Left lung (tissue), 14 donors: ENCODE measurements at regions of chr17 and their contacts with region 1.

Region 1: DNA sequence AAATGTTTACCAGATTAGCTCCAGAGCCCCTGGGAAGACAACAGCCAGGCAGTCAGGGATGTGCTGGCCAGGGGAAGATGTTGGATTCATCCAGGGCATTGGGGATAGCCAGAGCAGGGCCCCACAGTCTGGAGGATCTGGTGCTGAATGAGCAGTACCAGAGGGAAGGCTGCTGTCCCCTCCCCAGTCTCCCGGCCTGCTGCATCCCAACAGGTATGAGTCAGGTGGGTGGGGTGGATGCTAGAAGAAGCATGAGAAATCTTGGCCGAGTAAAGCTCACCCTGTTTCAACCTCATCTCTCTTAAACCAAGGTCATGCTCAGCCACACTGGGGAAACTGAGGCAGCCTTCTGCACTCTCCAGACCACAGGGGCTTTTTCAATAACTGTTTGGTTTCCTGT is 71.9 kb upstream of the SEC14L1 start:
- DNase-seq: no peak
- ATAC-seq: no peak
- H3K4me3 ChIP-seq: no peak overlapping the region
- H3K27ac ChIP-seq: no peak overlapping the region
- H3K4me1 ChIP-seq: no peaks in the 10 kb centered on the region
- H3K27me3 ChIP-seq: peaks cover 0 to 49% of the 10 kb centered on the region in 2 donors
- CTCF ChIP-seq: no peak

Region 2: DNA sequence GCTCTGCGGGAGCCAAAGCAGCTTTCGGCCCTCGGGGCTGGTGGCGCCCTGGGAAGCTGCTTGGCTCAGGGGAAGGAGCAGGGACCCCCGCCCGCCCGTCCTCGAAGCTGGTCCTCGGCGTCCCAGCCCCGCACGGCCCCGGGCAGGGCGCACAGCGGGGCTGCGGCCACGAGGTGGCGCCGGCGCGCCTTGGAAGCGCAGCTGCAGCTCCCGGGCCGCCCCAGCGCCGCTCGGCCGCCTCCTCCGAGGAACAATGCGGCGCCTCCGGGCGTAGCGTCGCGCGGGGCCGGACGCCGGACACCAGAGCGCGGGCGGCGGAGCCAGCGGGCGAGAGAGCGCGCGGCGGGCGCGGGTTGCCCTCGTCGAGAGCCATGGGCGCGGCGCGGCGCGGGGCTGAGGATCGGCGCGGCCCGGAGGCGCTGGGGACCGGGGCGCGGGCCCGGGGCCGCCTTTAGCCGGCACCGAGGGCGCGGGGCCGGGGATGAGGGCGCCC is 200.7 kb before region 1 on chr17 and contains the start of gene MGAT5B:
- intact Hi-C with region 1: loop called in 1 of 2 experiments (anchors 5 kb)
- DNase-seq: peak; percentile 61 to 94 (median 80)
- ATAC-seq: peak; percentile 98
- H3K4me3 ChIP-seq: peak within 1 kb of the TSS in 1 of 2 donors; percentile 28
- H3K27ac ChIP-seq: no peak within 1 kb of the TSS
- H3K4me1 ChIP-seq: peaks cover 0 to 25% of the 10 kb centered on the region in 2 donors
- H3K27me3 ChIP-seq: peaks cover 27 to 89% of the 10 kb centered on the region in 2 donors
- CTCF ChIP-seq: peak; percentile 88 to 91
- polyA plus RNA-seq, gene MGAT5B: 1.0 to 1.9 (median 1.5) TPM

Region 3: GRCh38 chr17:76957678-76958464 is 111.0 kb before region 1 on chr17:
- intact Hi-C with region 1: no loop called
- DNase-seq: peak in 1 of 4 donors; percentile 15
- ATAC-seq: no peak
- H3K4me3 ChIP-seq: no peak overlapping the region
- H3K27ac ChIP-seq: no peak overlapping the region
- H3K4me1 ChIP-seq: no peaks in the 10 kb centered on the region
- H3K27me3 ChIP-seq: peaks cover 0 to 27% of the 10 kb centered on the region in 2 donors
- CTCF ChIP-seq: no peak

Region 4: DNA sequence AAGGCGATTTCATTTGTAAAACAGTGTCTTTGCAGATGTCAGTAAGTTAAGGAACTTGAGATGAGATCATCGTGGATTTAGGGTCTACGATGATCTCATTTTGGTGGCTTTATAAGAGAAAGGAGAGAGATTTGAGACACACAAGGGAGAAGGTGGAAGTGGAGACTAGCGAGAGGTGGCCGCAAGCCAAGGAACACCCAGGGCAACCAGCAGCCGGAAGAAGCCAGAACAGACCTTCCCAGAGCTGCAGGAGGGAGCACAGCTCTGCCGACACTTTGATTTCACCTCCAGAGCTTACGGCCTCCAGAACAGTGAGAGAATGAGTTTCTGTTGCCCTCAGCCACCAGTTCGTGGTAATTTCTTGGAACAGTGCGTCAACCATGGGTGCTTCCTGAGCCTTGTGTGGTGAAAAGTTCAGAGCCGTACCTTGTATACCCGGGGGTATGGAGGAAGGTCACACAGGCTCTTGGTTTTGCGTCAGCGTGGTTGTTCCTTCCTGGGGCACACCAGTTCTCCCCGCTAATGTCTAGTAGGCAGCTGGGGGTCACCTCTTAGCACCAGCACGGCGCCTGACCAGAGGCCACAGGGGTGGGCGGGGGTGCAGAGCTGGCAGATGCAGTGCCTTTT is 58.9 kb after region 1 on chr17:
- intact Hi-C with region 1: no loop called
- DNase-seq: peak in 2 of 4 donors; percentile 77 to 86
- ATAC-seq: peak; percentile 61
- H3K4me3 ChIP-seq: peak overlapping the region in 1 of 2 donors; percentile 21
- H3K27ac ChIP-seq: peak overlapping the region; percentile 79 to 91
- H3K4me1 ChIP-seq: peaks cover 15 to 66% of the 10 kb centered on the region in 2 donors
- H3K27me3 ChIP-seq: no peaks in the 10 kb centered on the region
- CTCF ChIP-seq: no peak